ENCODE measurements at regions of chr16 and their contacts with region 1.

Region 1: DNA sequence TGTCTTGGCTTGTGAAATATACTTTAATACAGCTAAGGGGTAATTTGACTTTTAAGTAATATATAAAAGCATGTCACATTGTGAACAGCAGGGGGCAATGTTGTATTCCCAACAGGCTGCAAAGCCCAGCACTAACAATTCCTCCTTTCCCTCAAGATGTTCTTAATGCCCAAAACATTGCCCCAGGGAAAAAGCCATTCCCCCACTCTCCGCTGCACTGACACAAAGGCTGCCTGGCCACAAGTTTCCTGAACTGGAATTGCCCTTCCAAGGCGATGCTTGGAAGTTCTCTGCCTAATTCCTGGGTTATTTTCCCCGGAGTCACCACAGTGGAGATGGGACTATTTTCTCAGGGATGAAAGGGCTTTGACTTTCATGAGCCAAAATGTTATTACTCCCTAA is 27.2 kb downstream of the CLEC16A start:
- DNase-seq: peak in 4 of 5 donors; percentile 41 to 53 (median 48)
- H3K4me3 ChIP-seq: no peak overlapping the region
- H3K4me3 Mint-ChIP-seq: no peak overlapping the region
- H3K27ac ChIP-seq: no peak overlapping the region
- H3K27ac Mint-ChIP-seq: peak overlapping the region in 3 of 7 donors; percentile 25 to 30 (median 27)
- H3K4me1 ChIP-seq: peaks cover 17% of the 10 kb centered on the region
- H3K4me1 Mint-ChIP-seq: peaks cover 11 to 26% (median 13%) of the 10 kb centered on the region in 4 donors
- H3K27me3 ChIP-seq: no peaks in the 10 kb centered on the region
- H3K27me3 Mint-ChIP-seq: no peaks in the 10 kb centered on the region

Region 2: GRCh38 chr16:10954903-10955302 is 16.7 kb before region 1 on chr16:
- CTCF ChIA-PET with region 1: interaction called, 120 read pairs
- POLR2A ChIA-PET with region 1: no interaction called
- intact Hi-C with region 1: no loop called
- DNase-seq: no peak
- H3K4me3 ChIP-seq: no peak overlapping the region
- H3K4me3 Mint-ChIP-seq: no peak overlapping the region
- H3K27ac ChIP-seq: no peak overlapping the region
- H3K27ac Mint-ChIP-seq: peak overlapping the region in 5 of 7 donors; percentile 3 to 77 (median 11)
- H3K4me1 ChIP-seq: peaks cover 26% of the 10 kb centered on the region
- H3K4me1 Mint-ChIP-seq: peaks cover 20 to 50% (median 29%) of the 10 kb centered on the region in 4 donors
- H3K27me3 ChIP-seq: no peaks in the 10 kb centered on the region
- H3K27me3 Mint-ChIP-seq: no peaks in the 10 kb centered on the region

Region 3: GRCh38 chr16:10981697-10982216 is 10.2 kb after region 1 on chr16:
- CTCF ChIA-PET with region 1: interaction called, 14 read pairs
- POLR2A ChIA-PET with region 1: no interaction called
- intact Hi-C with region 1: no loop called
- DNase-seq: no peak
- H3K4me3 ChIP-seq: no peak overlapping the region
- H3K4me3 Mint-ChIP-seq: no peak overlapping the region
- H3K27ac ChIP-seq: no peak overlapping the region
- H3K27ac Mint-ChIP-seq: peak overlapping the region in 1 of 7 donors; percentile 74
- H3K4me1 ChIP-seq: peaks cover 15% of the 10 kb centered on the region
- H3K4me1 Mint-ChIP-seq: peaks cover 20 to 29% (median 27%) of the 10 kb centered on the region in 4 donors
- H3K27me3 ChIP-seq: no peaks in the 10 kb centered on the region
- H3K27me3 Mint-ChIP-seq: no peaks in the 10 kb centered on the region

Region 4: GRCh38 chr16:11297492-11298142 is 326.1 kb after region 1 on chr16:
- CTCF ChIA-PET with region 1: interaction called, 40 read pairs
- POLR2A ChIA-PET with region 1: no interaction called
- intact Hi-C with region 1: no loop called
- DNase-seq: peak; percentile 59 to 82 (median 62)
- H3K4me3 ChIP-seq: peak overlapping the region in 1 of 2 donors; percentile 29
- H3K4me3 Mint-ChIP-seq: peak overlapping the region; percentile 68 to 86 (median 78)
- H3K27ac ChIP-seq: no peak overlapping the region
- H3K27ac Mint-ChIP-seq: peak overlapping the region; percentile 6 to 74 (median 46)
- H3K4me1 ChIP-seq: peaks cover 16% of the 10 kb centered on the region
- H3K4me1 Mint-ChIP-seq: peaks cover 12 to 16% (median 13%) of the 10 kb centered on the region in 4 donors
- H3K27me3 ChIP-seq: no peaks in the 10 kb centered on the region
- H3K27me3 Mint-ChIP-seq: peaks cover 0 to 2% of the 10 kb centered on the region in 2 donors

Region 5: GRCh38 chr16:11356573-11357331 is 385.2 kb after region 1 on chr16:
- CTCF ChIA-PET with region 1: interaction called, 48 read pairs
- POLR2A ChIA-PET with region 1: interaction called, 6 read pairs
- intact Hi-C with region 1: no loop called
- DNase-seq: peak in 4 of 5 donors; percentile 40 to 48 (median 44)
- H3K4me3 ChIP-seq: no peak overlapping the region
- H3K4me3 Mint-ChIP-seq: no peak overlapping the region
- H3K27ac ChIP-seq: no peak overlapping the region
- H3K27ac Mint-ChIP-seq: peak overlapping the region in 4 of 7 donors; percentile 11 to 56 (median 38)
- H3K4me1 ChIP-seq: peaks cover 47% of the 10 kb centered on the region
- H3K4me1 Mint-ChIP-seq: peaks cover 37 to 74% (median 50%) of the 10 kb centered on the region in 4 donors
- H3K27me3 ChIP-seq: no peaks in the 10 kb centered on the region
- H3K27me3 Mint-ChIP-seq: peaks cover 4 to 16% of the 10 kb centered on the region in 2 donors

Region 6: DNA sequence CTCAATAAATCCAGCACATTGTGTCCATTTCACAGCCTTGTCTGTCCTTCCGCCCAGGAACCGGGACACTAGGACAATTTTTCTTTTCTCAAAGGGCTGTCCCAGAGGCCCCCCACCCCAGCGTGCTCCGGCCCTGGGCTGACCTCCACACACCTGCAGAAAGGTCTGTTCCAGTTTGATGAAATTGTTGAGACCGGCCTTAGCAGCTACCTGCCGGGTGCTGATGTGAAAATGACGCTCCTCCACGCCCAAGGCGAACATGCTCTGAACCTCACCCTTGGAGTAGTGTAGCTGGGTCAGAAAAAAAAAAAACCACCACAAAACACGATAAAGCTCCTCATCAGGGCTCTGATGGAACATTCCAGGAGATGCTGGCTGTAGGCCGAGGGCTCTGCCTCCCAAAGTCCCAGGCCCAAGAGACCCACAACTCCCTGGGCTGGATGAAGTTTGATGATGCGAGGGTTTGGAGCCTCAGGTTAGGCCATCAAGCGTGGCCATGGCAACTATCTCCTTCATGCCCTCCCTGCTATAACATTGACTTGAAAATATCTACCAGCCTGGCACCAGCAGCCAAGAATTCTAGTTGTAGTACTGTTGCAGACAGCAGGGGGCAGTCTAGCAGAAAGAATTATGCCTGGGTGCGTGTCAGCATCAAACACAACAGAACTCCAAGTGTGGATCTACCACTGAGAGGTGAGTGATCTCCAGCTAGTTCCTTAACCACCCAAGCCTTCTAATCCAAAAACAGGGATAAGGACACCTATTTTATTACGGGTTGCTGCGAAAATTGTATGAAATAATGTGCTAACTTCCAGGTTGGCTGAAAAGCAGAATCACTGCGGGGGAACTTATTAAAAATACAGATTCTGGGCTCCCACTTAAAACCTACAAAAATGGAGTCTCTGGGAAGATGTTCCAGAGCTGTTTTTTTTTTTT is 435.8 kb after region 1 on chr16:
- CTCF ChIA-PET with region 1: interaction called, 12 read pairs
- POLR2A ChIA-PET with region 1: no interaction called
- intact Hi-C with region 1: no loop called
- DNase-seq: peak; percentile 61 to 75 (median 67)
- H3K4me3 ChIP-seq: no peak overlapping the region
- H3K4me3 Mint-ChIP-seq: peak overlapping the region in 1 of 8 donors; percentile 48
- H3K27ac ChIP-seq: no peak overlapping the region
- H3K27ac Mint-ChIP-seq: peak overlapping the region in 2 of 7 donors; percentile 80 to 84
- H3K4me1 ChIP-seq: no peaks in the 10 kb centered on the region
- H3K4me1 Mint-ChIP-seq: peaks cover 0 to 6% (median 4%) of the 10 kb centered on the region in 4 donors
- H3K27me3 ChIP-seq: no peaks in the 10 kb centered on the region
- H3K27me3 Mint-ChIP-seq: no peaks in the 10 kb centered on the region

Measured in CD4-positive, alpha-beta memory T cell (primary cell).